Caco-2 (cell line): ENCODE measurements at regions of chr2 and their contacts with region 1.

Region 1: DNA sequence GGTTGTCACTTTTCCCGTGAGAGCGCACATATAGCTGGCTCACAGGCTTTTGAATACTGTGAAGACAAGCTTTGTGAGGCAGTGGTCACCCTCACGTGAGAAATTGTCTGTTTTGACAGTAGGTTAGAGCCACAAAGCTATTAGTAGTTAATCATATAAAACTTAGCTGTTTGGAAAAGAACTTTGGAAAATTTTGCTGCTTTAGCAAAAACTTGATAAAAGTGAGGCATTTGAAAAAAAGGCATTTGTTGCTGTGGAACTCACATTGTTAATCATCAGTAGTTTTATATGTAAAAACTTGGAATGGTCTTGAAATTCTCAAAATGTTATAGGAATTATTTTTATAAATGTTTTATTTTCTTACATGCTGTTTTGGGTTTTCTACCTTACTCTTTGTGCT is 22.3 kb downstream of the C2orf74 start:
- DNase-seq: no peak
- H3K4me3 ChIP-seq: no peak overlapping the region
- H3K4me3 Mint-ChIP-seq: no peak overlapping the region
- H3K27ac Mint-ChIP-seq: no peak overlapping the region
- H3K4me1 ChIP-seq: peaks cover under 1% of the 10 kb centered on the region; the same call in 1 of the 2 replicates
- H3K4me1 Mint-ChIP-seq: peaks cover 5% of the 10 kb centered on the region
- H3K27me3 ChIP-seq: no peaks in the 10 kb centered on the region
- H3K27me3 Mint-ChIP-seq: no peaks in the 10 kb centered on the region
- CTCF ChIP-seq: no peak

Region 2: GRCh38 chr2:61125123-61125710 is 59.0 kb before region 1 on chr2:
- CTCF ChIA-PET with region 1: no interaction called
- POLR2A ChIA-PET with region 1: no interaction called
- intact Hi-C with region 1: no loop called
- DNase-seq: no peak
- H3K4me3 ChIP-seq: no peak overlapping the region
- H3K4me3 Mint-ChIP-seq: no peak overlapping the region
- H3K27ac Mint-ChIP-seq: no peak overlapping the region
- H3K4me1 ChIP-seq: no peaks in the 10 kb centered on the region
- H3K4me1 Mint-ChIP-seq: no peaks in the 10 kb centered on the region
- H3K27me3 ChIP-seq: no peaks in the 10 kb centered on the region; the same call in 1 of the 2 replicates
- H3K27me3 Mint-ChIP-seq: no peaks in the 10 kb centered on the region
- CTCF ChIP-seq: no peak

Region 3: GRCh38 chr2:61196671-61197070 is 12.4 kb after region 1 on chr2:
- CTCF ChIA-PET with region 1: no interaction called
- POLR2A ChIA-PET with region 1: interaction called, 15 read pairs
- intact Hi-C with region 1: no loop called
- DNase-seq: no peak
- H3K4me3 ChIP-seq: no peak overlapping the region
- H3K4me3 Mint-ChIP-seq: no peak overlapping the region
- H3K27ac Mint-ChIP-seq: no peak overlapping the region
- H3K4me1 ChIP-seq: no peaks in the 10 kb centered on the region
- H3K4me1 Mint-ChIP-seq: no peaks in the 10 kb centered on the region
- H3K27me3 ChIP-seq: no peaks in the 10 kb centered on the region
- H3K27me3 Mint-ChIP-seq: no peaks in the 10 kb centered on the region
- CTCF ChIP-seq: no peak